ENCODE measurements at regions of chr1 and their contacts with region 1.

Region 1: GRCh38 chr1:181295215-181295614 is 188.1 kb upstream of the CACNA1E start:
- DNase-seq: no peak
- ATAC-seq: no peak

Region 2: DNA sequence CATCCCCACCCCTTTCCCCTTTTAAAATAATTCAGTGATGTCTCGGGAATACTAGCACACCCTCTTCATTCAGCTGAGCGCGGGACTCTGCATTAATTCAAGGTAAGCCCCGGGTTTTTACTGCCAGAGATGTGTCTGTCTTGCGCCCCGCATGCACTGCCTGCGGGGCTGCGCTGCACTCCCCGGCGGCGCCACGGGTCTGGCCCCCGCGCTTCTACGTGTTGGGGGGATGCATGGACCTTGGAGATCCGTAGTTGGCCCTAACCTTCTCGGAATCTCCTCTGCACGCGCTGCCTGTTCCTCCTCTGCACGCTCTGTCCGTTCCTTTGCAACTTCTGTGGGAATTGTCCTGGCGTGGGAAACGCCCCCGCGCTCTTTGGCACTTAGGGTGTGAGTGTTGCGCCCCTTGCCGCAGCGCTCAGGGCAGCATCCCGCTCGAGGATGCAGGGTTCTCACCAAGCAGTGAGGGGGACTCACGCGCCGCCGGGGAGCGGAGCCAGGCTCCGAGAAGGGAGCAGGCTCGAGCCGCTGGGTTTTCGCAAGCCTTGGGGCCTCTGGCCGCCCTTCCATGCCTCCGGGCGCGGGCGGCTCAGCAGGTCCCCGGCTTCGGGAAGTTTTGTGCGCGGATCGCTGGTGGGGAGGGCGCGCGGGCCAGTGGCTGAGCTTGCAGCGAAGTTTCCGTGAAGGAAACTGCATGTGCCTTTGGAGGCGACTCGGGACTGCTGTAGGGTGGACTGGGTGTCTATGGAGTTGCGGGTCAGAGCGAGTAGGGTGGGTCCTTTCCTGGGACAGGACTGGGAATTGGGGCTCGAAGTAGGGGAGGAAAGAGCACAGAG is 23.0 kb after region 1 on chr1:
- intact Hi-C with region 1: loop called (anchors 2 kb)
- DNase-seq: no peak
- ATAC-seq: no peak

Region 3: GRCh38 chr1:181640956-181641355 is 345.7 kb after region 1 on chr1:
- intact Hi-C with region 1: no loop called
- DNase-seq: no peak
- ATAC-seq: no peak

Measured in left ventricle myocardium superior (tissue), 1 donor.